Transverse colon (tissue), 4 donors: ENCODE measurements at regions of chr2 and their contacts with region 1.

Region 1: GRCh38 chr2:84735389-84735788 is 145.5 kb downstream of the TRABD2A start:
- DNase-seq: no peak
- H3K4me3 ChIP-seq: no peak overlapping the region
- H3K27ac ChIP-seq: no peak overlapping the region
- H3K4me1 ChIP-seq: no peaks in the 10 kb centered on the region
- H3K27me3 ChIP-seq: no peaks in the 10 kb centered on the region
- CTCF ChIP-seq: no peak
- EP300 ChIP-seq: no peak
- POLR2A ChIP-seq: no peak

Region 2: GRCh38 chr2:84713441-84713840 is 21.9 kb before region 1 on chr2:
- in situ Hi-C with region 1: no loop called
- intact Hi-C with region 1: loop called (anchors 1 kb)
- DNase-seq: no peak
- H3K4me3 ChIP-seq: no peak overlapping the region
- H3K27ac ChIP-seq: no peak overlapping the region
- H3K4me1 ChIP-seq: peaks cover 0 to 8% (median 0%) of the 10 kb centered on the region in 4 donors
- H3K27me3 ChIP-seq: no peaks in the 10 kb centered on the region
- CTCF ChIP-seq: no peak
- EP300 ChIP-seq: no peak
- POLR2A ChIP-seq: no peak